Activated CD4-positive, alpha-beta memory T cell treated with anti-CD3 and anti-CD28 coated beads, Interleukin-2, amount 10 ng/mL, durations not matched to agents 7 days and 5 days (primary cell): ENCODE measurements at regions of chr17 and their contacts with region 1.

Region 1: GRCh38 chr17:996554-997344 is at the start of gene TIMM22:
- DNase-seq: peak; percentile 94
- H3K4me3 Mint-ChIP-seq: peak within 1 kb of the TSS; percentile 91
- H3K27ac Mint-ChIP-seq: peak within 1 kb of the TSS; percentile 83
- H3K4me1 Mint-ChIP-seq: peaks cover 25% of the 10 kb centered on the region
- H3K27me3 Mint-ChIP-seq: no peaks in the 10 kb centered on the region
- total RNA-seq, gene TIMM22: 8.1 to 8.2 TPM

Region 2: GRCh38 chr17:781805-782731 is 214.7 kb before region 1 on chr17 and contains the starts of genes GLOD4 and MRM3:
- CTCF ChIA-PET with region 1: interaction called, 24 read pairs
- POLR2A ChIA-PET with region 1: interaction called, 23 read pairs
- DNase-seq: peak; percentile 96
- H3K4me3 Mint-ChIP-seq: peak within 1 kb of the TSS; percentile 93
- H3K27ac Mint-ChIP-seq: peak within 1 kb of the TSS; percentile 83
- H3K4me1 Mint-ChIP-seq: peaks cover 36% of the 10 kb centered on the region
- H3K27me3 Mint-ChIP-seq: no peaks in the 10 kb centered on the region
- total RNA-seq, gene GLOD4: 46.0 to 54.1 TPM
- total RNA-seq, gene MRM3: 12.8 to 15.8 TPM

Region 3: GRCh38 chr17:879549-880442 is 117.0 kb before region 1 on chr17:
- CTCF ChIA-PET with region 1: interaction called, 13 read pairs
- POLR2A ChIA-PET with region 1: interaction called, 3 read pairs
- DNase-seq: peak; percentile 70
- H3K4me3 Mint-ChIP-seq: no peak overlapping the region
- H3K27ac Mint-ChIP-seq: no peak overlapping the region
- H3K4me1 Mint-ChIP-seq: peaks cover 12% of the 10 kb centered on the region
- H3K27me3 Mint-ChIP-seq: peaks cover 16% of the 10 kb centered on the region

Region 4: DNA sequence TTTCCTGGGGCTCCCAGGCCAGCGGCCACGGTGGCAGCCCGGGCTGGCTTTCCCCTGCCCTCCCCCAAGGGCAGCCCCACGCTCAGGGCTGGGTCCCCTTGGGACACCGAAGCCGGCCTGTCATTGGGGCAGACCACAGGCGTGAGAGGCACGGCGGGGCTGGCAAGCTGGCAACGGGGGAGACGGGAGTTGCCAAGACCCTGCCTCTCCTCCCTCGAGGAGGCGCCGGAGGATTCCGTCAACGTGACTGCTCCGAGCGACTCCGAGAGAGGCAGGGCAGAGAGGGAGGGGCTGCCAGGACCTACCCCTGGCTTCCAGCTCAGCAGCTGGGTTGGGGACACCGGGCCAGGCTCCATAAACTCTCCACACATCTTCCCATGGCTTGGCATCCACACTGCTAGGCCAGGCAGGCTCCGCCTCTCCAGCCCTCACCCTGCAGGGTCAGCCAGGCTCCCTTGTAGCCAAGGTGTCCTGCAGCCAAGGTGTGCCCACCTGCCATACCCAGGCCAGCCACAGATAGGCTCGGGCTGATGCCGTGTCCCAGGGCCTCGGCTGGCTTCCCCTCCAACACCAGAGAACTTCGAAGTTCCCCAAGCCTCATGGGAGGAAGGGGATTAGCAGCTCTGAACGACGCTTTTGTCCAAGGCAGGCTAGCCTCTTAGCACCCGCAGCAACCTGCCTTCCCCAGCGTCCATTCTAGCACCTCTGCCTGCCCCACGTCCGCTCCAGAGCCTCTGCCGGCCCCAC is 25.7 kb after region 1 on chr17:
- CTCF ChIA-PET with region 1: no interaction called
- POLR2A ChIA-PET with region 1: no interaction called
- DNase-seq: no peak
- H3K4me3 Mint-ChIP-seq: no peak overlapping the region
- H3K27ac Mint-ChIP-seq: no peak overlapping the region
- H3K4me1 Mint-ChIP-seq: no peaks in the 10 kb centered on the region
- H3K27me3 Mint-ChIP-seq: no peaks in the 10 kb centered on the region